ENCODE measurements at regions of chr1 and their contacts with region 1.

Region 1: GRCh38 chr1:200620273-200621131 is at the start of gene KIF14:
- DNase-seq: peak; percentile 97
- H3K4me3 ChIP-seq: peak within 1 kb of the TSS; percentile 86 to 87
- H3K27ac ChIP-seq: peak within 1 kb of the TSS; percentile 48 to 75
- H3K4me1 ChIP-seq: no peaks in the 10 kb centered on the region; a peak in 2 of 4 replicates
- H3K27me3 ChIP-seq: no peaks in the 10 kb centered on the region
- CTCF ChIP-seq: no peak
- EP300 ChIP-seq: no peak
- RAD21 ChIP-seq: no peak
- polyA plus RNA-seq, gene KIF14: 1.2 and 1.4 TPM in 2 replicates

Region 2: GRCh38 chr1:200669314-200670241 is 49.1 kb after region 1 on chr1 and contains the start of gene DDX59:
- CTCF ChIA-PET with region 1: interaction called, 18 read pairs
- POLR2A ChIA-PET with region 1: interaction called, 3 read pairs
- DNase-seq: peak; percentile 98
- H3K4me3 ChIP-seq: peak within 1 kb of the TSS; percentile 84 to 95
- H3K27ac ChIP-seq: peak within 1 kb of the TSS; percentile 99
- H3K4me1 ChIP-seq: peaks cover 7 to 18% of the 10 kb centered on the region in 2 experiments; a peak in 3 of 4 replicates
- H3K27me3 ChIP-seq: no peaks in the 10 kb centered on the region
- CTCF ChIP-seq: no peak
- EP300 ChIP-seq: peak; percentile 22 to 36; a peak in 2 of 4 replicates
- RAD21 ChIP-seq: no peak
- polyA plus RNA-seq, gene DDX59: 8.9 and 13.5 TPM in 2 replicates

Region 3: GRCh38 chr1:200802865-200803512 is 182.5 kb after region 1 on chr1:
- CTCF ChIA-PET with region 1: interaction called, 62 read pairs
- POLR2A ChIA-PET with region 1: no interaction called
- DNase-seq: peak; percentile 66
- H3K4me3 ChIP-seq: peak overlapping the region in 1 of 2 experiments; percentile 16; a peak in 1 of 4 replicates
- H3K27ac ChIP-seq: peak overlapping the region in 1 of 2 experiments; percentile 5; a peak in 1 of 4 replicates
- H3K4me1 ChIP-seq: no peaks in the 10 kb centered on the region; a peak in 1 of 4 replicates
- H3K27me3 ChIP-seq: no peaks in the 10 kb centered on the region
- CTCF ChIP-seq: peak; percentile 97
- EP300 ChIP-seq: peak in 1 of 2 experiments; percentile 37; a peak in 1 of 4 replicates
- RAD21 ChIP-seq: peak; percentile 94

Region 4: DNA sequence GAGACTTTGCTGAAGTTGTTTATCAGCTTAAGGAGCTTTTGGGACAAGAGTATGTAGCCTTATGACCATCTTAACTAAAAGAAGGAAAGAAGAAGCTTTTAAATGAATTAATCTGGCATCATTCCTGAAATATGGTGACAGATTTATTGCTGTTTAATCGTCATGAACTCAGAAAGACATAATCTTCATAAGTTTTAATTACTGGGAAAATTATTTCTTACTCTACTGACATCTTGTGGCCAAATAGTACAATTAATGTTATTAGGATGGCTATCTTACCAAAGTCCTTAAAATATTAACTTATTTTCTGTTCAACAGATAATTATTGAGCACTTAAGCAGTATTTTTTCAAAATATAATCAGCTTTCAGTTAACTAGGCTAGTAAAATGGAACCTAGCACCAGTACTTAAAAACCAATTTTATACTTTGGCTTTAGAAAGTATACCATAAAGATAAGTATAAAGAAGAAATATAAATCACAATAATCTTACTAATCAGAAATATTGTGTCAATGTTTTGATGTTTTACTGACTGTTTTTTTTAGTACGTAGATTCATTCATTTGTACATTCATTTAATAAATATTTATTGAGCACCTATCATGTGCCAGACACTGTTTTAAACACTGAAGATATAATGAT is 217.5 kb after region 1 on chr1:
- CTCF ChIA-PET with region 1: interaction called, 21 read pairs
- POLR2A ChIA-PET with region 1: no interaction called
- DNase-seq: no peak
- H3K4me3 ChIP-seq: no peak overlapping the region
- H3K27ac ChIP-seq: 0 out of 4 replicates have a peak overlapping the region, but pooled peaks of 1 of the 2 experiments have one; percentile 11
- H3K4me1 ChIP-seq: peaks cover 0 to 10% of the 10 kb centered on the region in 2 experiments; a peak in 1 of 4 replicates
- H3K27me3 ChIP-seq: no peaks in the 10 kb centered on the region
- CTCF ChIP-seq: peak; percentile 73
- EP300 ChIP-seq: no peak
- RAD21 ChIP-seq: peak; percentile 46